Sciatic nerve (tissue), 2 donors: ENCODE measurements at regions of chr9 and their contacts with region 1.

Region 1: DNA sequence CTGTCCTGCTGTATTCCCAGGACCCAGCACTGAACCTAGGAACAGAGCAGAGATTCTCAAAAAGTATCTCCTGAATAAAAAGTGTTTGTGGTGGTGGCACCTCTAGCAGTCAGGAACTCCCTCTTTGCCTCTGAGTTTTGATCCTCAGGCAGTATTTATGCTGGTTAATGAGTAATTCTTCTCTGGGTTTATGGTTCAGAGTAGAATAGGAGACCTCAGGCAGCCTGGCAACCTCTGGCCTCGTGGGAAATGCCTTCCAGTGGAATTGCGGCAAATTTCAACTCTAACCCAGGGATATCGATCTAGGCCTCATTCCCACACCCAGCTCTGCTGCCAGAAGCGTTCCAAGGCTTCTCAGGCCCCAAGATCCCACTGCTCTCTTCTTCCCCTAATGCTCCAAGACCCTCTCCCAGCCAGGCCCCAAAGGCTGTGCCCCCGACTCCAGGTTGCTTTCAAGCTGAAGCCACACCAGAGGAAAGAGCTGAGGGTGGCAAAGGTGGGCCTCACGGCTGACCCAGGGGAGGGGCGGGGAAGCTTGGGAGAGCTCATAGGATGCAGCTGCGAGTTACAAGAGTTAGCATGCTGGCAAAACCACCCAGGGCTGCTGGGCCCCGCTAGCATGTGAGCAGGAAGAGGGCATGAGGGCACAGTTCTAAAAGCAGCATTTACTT is 10.9 kb upstream of the HDHD3 start:
- DNase-seq: no peak
- ATAC-seq: no peak

Region 2: GRCh38 chr9:113275157-113276131 is 112.3 kb before region 1 on chr9 and contains the starts of genes CDC26 and PRPF4:
- intact Hi-C with region 1: no loop called
- DNase-seq: peak; percentile 98
- ATAC-seq: peak; percentile 99
- total RNA-seq, gene CDC26: 28.2 TPM
- total RNA-seq, gene PRPF4: 16.3 TPM

Region 3: GRCh38 chr9:113349445-113350094 is 38.1 kb before region 1 on chr9 and contains the start of gene BSPRY:
- intact Hi-C with region 1: loop called (anchors 5 kb)
- DNase-seq: no peak
- ATAC-seq: peak; percentile 18
- total RNA-seq, gene BSPRY: 0.22 TPM